ENCODE measurements at regions of chr9 and their contacts with region 1.

Region 1: DNA sequence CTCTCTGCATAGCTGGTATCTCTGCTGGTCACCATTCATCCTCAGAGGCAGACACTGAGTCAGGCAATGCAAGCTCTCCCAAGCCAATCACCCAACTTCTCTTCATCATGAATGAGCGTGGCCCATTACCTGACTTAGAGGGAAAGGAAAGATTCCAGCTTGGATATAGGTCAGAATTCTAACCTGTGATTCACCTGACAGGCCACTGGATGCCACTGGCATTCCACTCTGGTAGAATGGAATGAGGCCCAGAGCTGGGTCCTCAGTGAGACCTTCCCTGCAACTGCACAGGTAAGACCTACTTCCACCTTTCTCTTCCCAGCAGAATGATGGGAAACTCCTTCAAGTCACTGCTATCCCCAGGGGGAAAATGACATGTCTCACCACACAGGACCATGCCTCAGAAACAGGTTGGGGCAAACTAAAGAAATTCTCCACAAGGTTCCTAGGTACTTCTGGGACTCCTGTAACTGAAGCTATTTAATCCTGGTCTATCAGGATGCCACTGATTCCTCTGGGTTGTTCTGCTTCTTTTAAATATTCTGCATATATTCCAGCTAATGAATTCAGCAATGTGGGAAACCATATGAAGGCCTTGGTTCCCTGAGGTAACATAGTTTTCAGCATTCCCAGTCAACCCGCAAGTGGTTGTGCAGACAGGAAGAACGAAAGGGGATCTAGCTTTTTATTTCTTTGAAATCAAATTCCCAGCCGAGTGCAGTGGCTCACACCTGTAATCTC is 62.0 kb downstream of the SUSD1 start:
- DNase-seq: peak; percentile 82
- ATAC-seq: peak; percentile 91
- H3K4me3 ChIP-seq: peak overlapping the region in 1 of 2 experiments; percentile 11; a peak in 1 of 4 replicates
- H3K27ac ChIP-seq: peak overlapping the region; percentile 55
- H3K4me1 ChIP-seq: peaks cover 46 to 48% of the 10 kb centered on the region in 2 experiments
- H3K27me3 ChIP-seq: no peaks in the 10 kb centered on the region
- CTCF ChIP-seq: peak; percentile 57 to 91 (median 80)
- POLR2A ChIP-seq: no peak
- RAD21 ChIP-seq: peak; percentile 99

Region 2: DNA sequence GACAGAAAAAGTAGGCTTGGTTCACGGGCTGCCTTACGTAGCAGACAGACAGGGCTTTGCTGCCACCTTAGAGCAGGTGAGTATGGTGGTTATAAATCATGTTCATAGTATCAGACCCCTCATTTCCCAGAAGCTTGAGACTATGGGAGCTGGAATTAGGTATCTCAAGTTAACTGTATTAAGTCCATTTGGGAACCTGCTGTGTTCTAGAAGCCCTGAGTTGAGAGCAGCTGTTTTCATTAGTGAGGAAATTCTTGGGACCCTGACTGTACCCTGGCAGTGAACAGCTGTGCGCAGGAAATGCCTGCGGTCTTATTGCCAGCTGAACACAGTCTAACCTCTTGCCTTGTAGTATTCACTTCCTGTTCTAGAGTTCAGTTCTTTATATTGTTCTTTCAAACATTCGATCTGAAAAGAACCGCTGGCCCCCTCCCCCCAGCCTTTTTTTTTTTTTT is 186.7 kb before region 1 on chr9:
- CTCF ChIA-PET with region 1: no interaction called
- POLR2A ChIA-PET with region 1: no interaction called
- RAD21 ChIA-PET with region 1: no interaction called
- intact Hi-C with region 1: no loop called
- DNase-seq: no peak
- ATAC-seq: no peak
- H3K4me3 ChIP-seq: no peak overlapping the region
- H3K27ac ChIP-seq: no peak overlapping the region
- H3K4me1 ChIP-seq: peaks cover 0 to 9% of the 10 kb centered on the region in 2 experiments; a peak in 1 of 4 replicates
- H3K27me3 ChIP-seq: no peaks in the 10 kb centered on the region
- CTCF ChIP-seq: no peak
- POLR2A ChIP-seq: no peak
- RAD21 ChIP-seq: no peak

Region 3: GRCh38 chr9:112097712-112098688 is 15.1 kb before region 1 on chr9:
- CTCF ChIA-PET with region 1: interaction called, 17 read pairs
- POLR2A ChIA-PET with region 1: no interaction called
- RAD21 ChIA-PET with region 1: interaction called in 1 of 2 experiments, 3 read pairs
- intact Hi-C with region 1: no loop called
- DNase-seq: peak; percentile 62
- ATAC-seq: peak; percentile 94
- H3K4me3 ChIP-seq: no peak overlapping the region
- H3K27ac ChIP-seq: no peak overlapping the region
- H3K4me1 ChIP-seq: peaks cover 0 to 7% of the 10 kb centered on the region in 2 experiments; a peak in 3 of 4 replicates
- H3K27me3 ChIP-seq: no peaks in the 10 kb centered on the region
- CTCF ChIP-seq: peak; percentile 83 to 90 (median 84)
- POLR2A ChIP-seq: no peak
- RAD21 ChIP-seq: peak; percentile 89

Region 4: GRCh38 chr9:112166172-112167140 is 53.3 kb after region 1 on chr9:
- CTCF ChIA-PET with region 1: no interaction called
- POLR2A ChIA-PET with region 1: no interaction called
- RAD21 ChIA-PET with region 1: no interaction called
- intact Hi-C with region 1: no loop called
- DNase-seq: no peak
- ATAC-seq: no peak
- H3K4me3 ChIP-seq: no peak overlapping the region
- H3K27ac ChIP-seq: no peak overlapping the region
- H3K4me1 ChIP-seq: peaks cover 14 to 35% of the 10 kb centered on the region in 2 experiments
- H3K27me3 ChIP-seq: no peaks in the 10 kb centered on the region
- CTCF ChIP-seq: peak in 1 of 3 experiments; percentile 12; a peak in 1 of 6 replicates
- POLR2A ChIP-seq: no peak
- RAD21 ChIP-seq: peak; percentile 50

Region 5: DNA sequence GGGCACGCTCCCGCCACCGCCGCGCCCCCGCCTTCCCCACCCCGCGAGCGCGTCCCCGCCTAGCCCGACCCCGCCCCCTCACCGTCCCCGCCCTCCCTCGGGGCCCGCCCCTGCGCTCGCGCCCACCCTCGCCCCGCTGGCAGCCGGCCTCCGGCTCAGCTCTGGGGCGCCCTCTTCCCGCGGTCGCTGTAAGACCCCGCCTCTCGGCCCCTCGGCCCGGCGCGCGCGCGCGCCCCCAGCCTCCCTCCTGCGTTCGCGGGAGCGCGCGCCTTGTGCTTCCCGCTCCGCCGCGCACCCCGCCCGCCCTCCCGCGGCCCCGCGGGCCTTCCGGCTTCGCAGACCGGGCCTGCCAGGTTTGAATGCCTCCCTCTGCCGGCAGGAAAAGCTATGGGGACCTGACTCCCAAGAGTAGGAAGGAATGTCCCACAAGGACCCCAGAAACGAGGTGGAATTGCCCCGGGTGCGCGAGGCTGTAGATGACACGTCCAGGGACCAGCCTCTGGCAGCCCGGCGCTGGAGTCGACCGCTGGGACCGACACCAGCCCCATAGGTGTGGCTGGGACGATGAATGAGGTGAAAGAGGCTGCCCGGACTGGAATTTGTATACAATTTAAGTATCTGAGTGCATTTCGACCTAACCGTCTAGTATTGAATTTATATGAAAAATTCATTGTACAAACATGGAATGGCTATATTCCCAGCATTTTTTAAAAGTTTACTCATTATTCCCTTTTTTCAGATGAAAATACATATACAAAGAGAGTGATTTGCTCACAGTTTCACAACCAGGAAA is 220.7 kb after region 1 on chr9:
- CTCF ChIA-PET with region 1: interaction called, 10 read pairs
- POLR2A ChIA-PET with region 1: interaction called, 4 read pairs
- RAD21 ChIA-PET with region 1: interaction called, 7 to 15 read pairs
- intact Hi-C with region 1: loop called (anchors 1 kb)
- DNase-seq: peak; percentile 87
- ATAC-seq: peak; percentile 85
- H3K4me3 ChIP-seq: peak overlapping the region; percentile 60 to 72
- H3K27ac ChIP-seq: peak overlapping the region; percentile 100
- H3K4me1 ChIP-seq: peaks cover 23 to 43% of the 10 kb centered on the region in 2 experiments
- H3K27me3 ChIP-seq: no peaks in the 10 kb centered on the region
- CTCF ChIP-seq: peak; percentile 34 to 49 (median 43); a peak in 5 of 6 replicates
- POLR2A ChIP-seq: no peak
- RAD21 ChIP-seq: peak; percentile 55

Region 6: GRCh38 chr9:112361601-112362000 is 248.5 kb after region 1 on chr9:
- CTCF ChIA-PET with region 1: interaction called, 57 read pairs
- POLR2A ChIA-PET with region 1: interaction called, 3 read pairs
- RAD21 ChIA-PET with region 1: interaction called, 7 to 10 read pairs
- intact Hi-C with region 1: loop called (anchors 1 kb)
- DNase-seq: peak; percentile 33
- ATAC-seq: 0 out of 2 replicates have a peak, but pooled peaks have one; percentile 50
- H3K4me3 ChIP-seq: no peak overlapping the region
- H3K27ac ChIP-seq: no peak overlapping the region
- H3K4me1 ChIP-seq: peaks cover 7 to 10% of the 10 kb centered on the region in 2 experiments; a peak in 3 of 4 replicates
- H3K27me3 ChIP-seq: no peaks in the 10 kb centered on the region
- CTCF ChIP-seq: peak in 2 of 3 experiments; percentile 58 to 86; a peak in 4 of 6 replicates
- POLR2A ChIP-seq: no peak
- RAD21 ChIP-seq: peak; percentile 86

Region 7: DNA sequence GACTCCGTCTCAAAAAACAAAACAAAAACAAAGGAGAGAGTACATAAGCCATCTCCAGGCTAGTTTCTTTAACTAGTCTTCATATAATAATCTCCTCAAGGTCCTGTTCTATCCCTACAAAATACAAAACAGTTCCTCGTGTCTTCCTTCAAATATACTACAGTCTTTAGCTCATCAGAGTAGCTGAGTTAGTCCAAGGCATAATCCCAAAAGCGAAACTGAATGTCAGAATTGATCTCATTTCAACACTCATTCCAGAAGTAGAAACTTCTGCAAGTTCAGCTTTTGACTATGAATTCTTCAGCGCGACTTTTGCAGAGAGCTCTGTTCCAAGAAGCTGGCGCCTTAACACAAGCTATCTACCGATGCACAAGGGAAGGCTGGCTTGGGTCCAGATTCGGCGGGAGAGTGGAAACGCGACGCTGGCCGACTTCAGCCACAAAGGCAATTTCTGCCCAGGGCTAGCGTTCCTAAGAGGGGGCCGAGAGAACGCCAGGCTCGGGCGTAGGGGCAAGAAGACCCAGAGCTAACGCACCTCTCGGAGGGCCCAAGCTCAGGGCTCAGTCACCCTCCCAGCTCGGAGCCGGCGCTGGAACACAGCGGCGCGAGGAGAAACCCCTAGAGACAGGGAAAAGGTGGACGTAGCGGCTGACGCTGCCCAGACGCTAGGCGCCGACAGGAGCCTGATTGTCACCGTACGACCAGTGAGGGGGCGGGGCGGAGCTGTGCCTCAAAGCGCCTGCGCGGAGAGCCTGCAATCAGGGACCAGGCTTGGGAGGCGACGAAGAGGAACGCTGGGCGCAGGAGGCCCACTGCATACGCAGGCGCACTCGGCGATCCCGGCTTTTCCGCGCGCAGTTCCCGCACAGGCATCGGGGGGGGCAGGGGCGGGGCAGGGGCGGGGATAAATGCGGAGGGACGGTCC is 266.3 kb after region 1 on chr9:
- CTCF ChIA-PET with region 1: interaction called, 12 read pairs
- POLR2A ChIA-PET with region 1: interaction called, 6 read pairs
- RAD21 ChIA-PET with region 1: interaction called in 1 of 2 experiments, 4 read pairs
- intact Hi-C with region 1: no loop called
- DNase-seq: peak; percentile 96
- ATAC-seq: peak; percentile 94
- H3K4me3 ChIP-seq: peak overlapping the region; percentile 86 to 92
- H3K27ac ChIP-seq: peak overlapping the region; percentile 92
- H3K4me1 ChIP-seq: peaks cover 7 to 12% of the 10 kb centered on the region in 2 experiments; a peak in 3 of 4 replicates
- H3K27me3 ChIP-seq: no peaks in the 10 kb centered on the region
- CTCF ChIP-seq: no peak
- POLR2A ChIP-seq: peak; percentile 85
- RAD21 ChIP-seq: no peak

Region 8: DNA sequence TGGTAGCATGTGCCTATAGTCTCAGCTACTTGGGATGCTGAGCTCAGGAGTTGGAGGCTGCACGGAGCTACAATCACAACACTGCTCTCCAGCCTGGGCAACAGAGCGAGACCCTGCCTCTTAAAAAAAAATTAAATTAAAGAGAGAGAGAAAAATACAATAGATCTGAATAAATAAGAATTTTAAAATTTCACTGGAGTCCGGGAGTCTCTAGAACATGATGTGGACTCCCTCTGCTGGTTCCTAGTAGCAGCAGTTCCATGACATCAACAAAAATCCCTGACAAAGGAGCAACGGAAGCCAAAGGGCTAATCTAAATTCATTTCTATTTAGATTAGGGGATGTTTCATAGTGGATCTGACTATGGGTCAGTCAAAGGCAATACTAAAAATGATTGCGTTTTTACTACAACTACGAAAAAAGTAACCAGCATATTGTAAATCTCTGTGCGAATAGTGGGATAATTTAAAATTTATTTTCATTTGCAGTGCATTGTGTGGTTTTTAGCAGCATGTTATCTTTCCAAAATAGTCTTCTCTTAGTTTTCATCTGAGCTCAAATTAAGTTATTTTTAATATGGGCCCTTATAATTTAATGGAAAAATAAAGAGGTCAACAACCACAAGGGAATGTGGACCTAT is 598.1 kb after region 1 on chr9:
- CTCF ChIA-PET with region 1: interaction called, 3 read pairs
- POLR2A ChIA-PET with region 1: no interaction called
- RAD21 ChIA-PET with region 1: no interaction called
- intact Hi-C with region 1: loop called (anchors 2 kb)
- DNase-seq: no peak
- ATAC-seq: no peak
- H3K4me3 ChIP-seq: no peak overlapping the region
- H3K27ac ChIP-seq: no peak overlapping the region
- H3K4me1 ChIP-seq: no peaks in the 10 kb centered on the region
- H3K27me3 ChIP-seq: no peaks in the 10 kb centered on the region
- CTCF ChIP-seq: peak; percentile 36 to 57 (median 49); a peak in 5 of 6 replicates
- POLR2A ChIP-seq: no peak
- RAD21 ChIP-seq: peak; percentile 56

Region 9: GRCh38 chr9:112793213-112793810 is 680.2 kb after region 1 on chr9:
- CTCF ChIA-PET with region 1: interaction called, 8 read pairs
- POLR2A ChIA-PET with region 1: no interaction called
- RAD21 ChIA-PET with region 1: interaction called in 1 of 2 experiments, 4 read pairs
- intact Hi-C with region 1: loop called (anchors 1 kb)
- DNase-seq: peak; percentile 51
- ATAC-seq: peak; percentile 99
- H3K4me3 ChIP-seq: no peak overlapping the region
- H3K27ac ChIP-seq: no peak overlapping the region
- H3K4me1 ChIP-seq: peaks cover 0 to 4% of the 10 kb centered on the region in 2 experiments; a peak in 2 of 4 replicates
- H3K27me3 ChIP-seq: no peaks in the 10 kb centered on the region
- CTCF ChIP-seq: peak; percentile 64 to 94 (median 86); a peak in 5 of 6 replicates
- POLR2A ChIP-seq: no peak
- RAD21 ChIP-seq: peak; percentile 91

Measured in HCT116 (cell line).